ENCODE measurements at regions of chr1 and their contacts with region 1.

Region 1: DNA sequence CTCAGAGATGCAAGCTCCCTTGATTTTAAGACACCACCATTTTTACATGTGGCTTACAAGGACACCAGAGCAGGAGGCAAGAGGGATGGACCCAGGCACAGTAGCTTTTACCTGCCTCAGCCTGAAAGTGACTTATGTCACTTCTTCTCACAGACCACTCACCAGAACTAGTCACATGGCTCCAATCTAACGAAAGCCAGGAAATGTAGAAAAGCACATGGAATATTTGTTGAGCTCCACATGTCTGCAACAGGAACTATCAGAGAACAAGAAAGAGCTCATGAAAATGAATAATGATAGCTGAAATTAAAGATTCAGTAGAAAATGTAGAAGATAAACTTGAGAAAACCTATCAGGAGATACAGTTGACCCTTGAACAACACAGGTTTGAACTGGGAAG is 69.4 kb downstream of the ZNF648 start:
- DNase-seq: no peak
- H3K4me3 Mint-ChIP-seq: no peak overlapping the region
- H3K27ac Mint-ChIP-seq: no peak overlapping the region
- H3K4me1 Mint-ChIP-seq: no peaks in the 10 kb centered on the region
- H3K27me3 Mint-ChIP-seq: peaks cover 4% of the 10 kb centered on the region
- CTCF ChIP-seq: no peak

Region 2: DNA sequence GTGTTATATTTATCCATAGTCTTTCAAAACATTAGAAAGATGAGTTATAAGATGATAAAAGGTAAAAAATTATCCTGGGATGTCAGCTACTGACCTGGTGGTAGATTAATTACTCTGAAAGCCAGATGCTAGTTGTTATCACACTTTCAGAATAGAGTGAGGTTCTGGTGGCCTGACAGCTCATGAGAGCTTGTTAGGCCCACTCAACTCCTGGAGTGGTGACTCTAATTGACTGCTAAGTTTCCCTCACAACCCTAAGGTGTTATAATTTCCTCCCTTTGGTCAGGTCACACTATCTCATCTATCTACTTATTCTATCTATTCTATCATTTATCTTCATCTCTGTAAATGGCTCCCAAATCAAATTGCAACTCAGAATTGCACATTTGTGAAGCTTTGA is 20.6 kb before region 1 on chr1:
- CTCF ChIA-PET with region 1: interaction called, 10 read pairs
- intact Hi-C with region 1: no loop called
- DNase-seq: no peak
- H3K4me3 Mint-ChIP-seq: no peak overlapping the region
- H3K27ac Mint-ChIP-seq: no peak overlapping the region
- H3K4me1 Mint-ChIP-seq: no peaks in the 10 kb centered on the region
- H3K27me3 Mint-ChIP-seq: peaks cover 27% of the 10 kb centered on the region
- CTCF ChIP-seq: no peak

Region 3: DNA sequence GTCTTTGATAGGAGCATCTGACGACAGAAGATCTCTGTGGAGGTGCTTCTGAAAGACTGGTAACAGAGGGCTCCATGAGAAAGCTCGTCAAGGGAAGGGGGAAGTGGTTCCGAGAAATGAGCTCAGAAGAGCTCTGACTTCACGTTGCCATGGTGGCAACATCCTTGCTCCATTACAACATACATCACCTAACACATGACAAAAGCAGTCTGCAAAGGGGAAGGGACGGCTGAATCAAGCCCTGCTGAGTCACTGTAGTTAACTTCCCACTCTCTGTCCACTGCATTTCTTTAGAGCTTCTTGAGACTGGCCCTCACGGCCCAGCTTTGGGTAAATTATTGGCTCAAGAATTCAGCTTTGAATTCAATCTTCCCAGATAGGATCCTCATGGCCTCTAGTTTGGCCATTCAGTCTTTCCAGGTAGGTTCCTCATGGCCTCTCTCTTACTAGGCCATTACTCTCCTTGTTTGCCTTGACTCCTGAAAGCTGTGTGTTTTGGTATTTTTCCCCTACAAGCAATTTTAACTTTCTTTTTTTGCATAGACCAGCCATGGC is 157.4 kb after region 1 on chr1:
- CTCF ChIA-PET with region 1: no interaction called
- intact Hi-C with region 1: no loop called
- DNase-seq: no peak
- H3K4me3 Mint-ChIP-seq: no peak overlapping the region
- H3K27ac Mint-ChIP-seq: no peak overlapping the region
- H3K4me1 Mint-ChIP-seq: peaks cover 15% of the 10 kb centered on the region
- H3K27me3 Mint-ChIP-seq: no peaks in the 10 kb centered on the region
- CTCF ChIP-seq: no peak